ENCODE measurements at regions of chr11 and their contacts with region 1.

Region 1: DNA sequence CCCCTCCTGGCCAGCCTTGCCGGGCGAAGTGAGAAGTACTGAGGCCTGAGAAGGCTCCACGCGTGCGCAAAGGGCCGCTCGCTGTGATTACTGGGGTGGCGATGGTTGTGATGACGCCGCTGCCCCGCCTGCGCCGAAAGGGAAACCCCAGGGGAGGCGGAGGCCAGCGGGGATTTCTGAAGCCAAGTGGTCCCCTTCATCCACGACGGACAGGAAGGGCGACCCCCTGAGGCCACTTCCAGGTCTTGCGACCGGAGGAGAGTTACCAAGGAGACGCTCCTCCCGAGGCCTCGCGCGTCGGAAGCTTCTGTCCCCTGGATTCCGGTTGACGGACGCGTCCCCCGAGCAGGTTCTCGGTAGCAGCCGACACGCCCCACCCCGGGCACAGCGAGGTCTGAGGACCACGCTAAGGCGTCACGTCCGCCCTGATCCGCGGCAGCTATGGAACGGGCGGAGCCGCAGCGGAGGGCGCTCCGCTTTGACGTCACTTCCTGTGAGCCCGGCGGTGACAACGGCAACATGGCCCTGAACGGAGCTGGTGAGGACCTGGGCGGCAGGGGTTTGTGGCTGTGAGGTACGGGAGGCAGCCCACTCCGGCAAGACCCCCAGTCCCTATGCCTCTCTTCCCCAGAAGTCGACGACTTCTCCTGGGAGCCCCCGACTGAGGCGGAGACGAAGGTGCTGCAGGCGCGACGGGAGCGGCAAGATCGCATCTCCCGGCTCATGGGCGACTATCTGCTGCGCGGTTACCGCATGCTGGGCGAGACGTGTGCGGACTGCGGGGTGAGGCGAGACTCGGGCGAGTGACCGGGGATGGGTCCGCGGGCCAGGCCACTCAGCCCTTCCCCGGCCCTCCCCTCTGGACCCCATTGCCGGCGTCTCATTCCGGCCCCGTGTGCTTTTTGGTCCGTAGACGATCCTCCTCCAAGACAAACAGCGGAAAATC is at the start of gene ZNRD2:
- DNase-seq: peak; percentile 99
- ATAC-seq: peak; percentile 87
- total RNA-seq, gene ZNRD2: 23.2 TPM

Region 2: GRCh38 chr11:65606876-65607613 is 36.8 kb after region 1 on chr11:
- intact Hi-C with region 1: loop called (anchors 5 kb)
- DNase-seq: peak; percentile 95
- ATAC-seq: peak; percentile 97

Region 3: DNA sequence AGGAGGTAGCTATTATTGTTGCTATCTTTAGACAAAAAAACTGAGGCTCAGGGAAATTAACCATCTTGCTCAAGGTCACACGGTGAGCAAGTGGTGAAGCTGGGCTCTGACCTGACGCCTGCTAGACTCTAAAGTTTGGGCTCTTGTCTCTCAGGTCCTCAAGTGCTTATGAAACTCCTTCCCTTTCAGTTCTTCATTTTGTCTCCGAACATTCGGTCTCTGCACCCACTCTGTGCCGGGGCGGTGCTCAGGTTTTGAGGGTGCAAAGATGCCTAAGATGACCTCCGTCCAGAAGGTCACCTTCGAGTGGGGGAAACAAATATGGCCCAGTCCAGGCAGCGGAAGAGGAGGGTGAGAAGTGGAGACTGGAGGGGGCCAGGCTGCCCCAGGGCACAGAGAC is 232.6 kb after region 1 on chr11:
- intact Hi-C with region 1: no loop called
- DNase-seq: no peak
- ATAC-seq: no peak